ENCODE measurements at regions of chr11 and their contacts with region 1.

Region 1: DNA sequence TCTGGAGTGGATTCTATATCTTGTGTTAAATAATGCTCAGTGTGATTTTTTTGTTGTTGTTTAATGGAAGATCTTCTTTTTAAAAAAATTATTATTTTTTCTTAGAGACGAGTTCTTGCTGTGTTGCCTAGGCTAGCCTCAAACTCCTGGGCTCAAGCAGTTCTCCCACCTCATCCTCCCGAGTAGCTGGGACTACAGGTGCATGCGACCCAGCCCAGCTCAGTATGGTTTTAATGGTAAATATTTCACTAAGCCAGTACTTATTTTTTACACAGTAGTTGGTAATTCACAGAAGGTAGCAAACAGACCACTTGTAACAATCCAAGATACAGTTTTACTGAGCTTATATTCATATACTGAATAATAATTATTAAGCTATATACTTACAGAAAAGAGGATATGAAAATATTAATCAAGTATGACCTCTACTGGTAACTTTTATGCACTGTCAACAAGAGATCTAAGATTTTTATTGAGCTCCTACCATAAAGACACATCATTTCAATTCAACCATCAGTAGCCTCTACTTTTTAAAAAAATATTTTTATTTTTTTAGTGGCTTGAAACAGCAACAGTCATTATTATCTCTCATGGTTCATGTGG is 6.1 kb upstream of the CD59 start:
- DNase-seq: peak; percentile 37
- H3K4me3 Mint-ChIP-seq: no peak overlapping the region
- H3K27ac Mint-ChIP-seq: no peak overlapping the region
- H3K4me1 Mint-ChIP-seq: peaks cover 14% of the 10 kb centered on the region
- H3K27me3 Mint-ChIP-seq: no peaks in the 10 kb centered on the region
- CTCF ChIP-seq: peak; percentile 38

Region 2: DNA sequence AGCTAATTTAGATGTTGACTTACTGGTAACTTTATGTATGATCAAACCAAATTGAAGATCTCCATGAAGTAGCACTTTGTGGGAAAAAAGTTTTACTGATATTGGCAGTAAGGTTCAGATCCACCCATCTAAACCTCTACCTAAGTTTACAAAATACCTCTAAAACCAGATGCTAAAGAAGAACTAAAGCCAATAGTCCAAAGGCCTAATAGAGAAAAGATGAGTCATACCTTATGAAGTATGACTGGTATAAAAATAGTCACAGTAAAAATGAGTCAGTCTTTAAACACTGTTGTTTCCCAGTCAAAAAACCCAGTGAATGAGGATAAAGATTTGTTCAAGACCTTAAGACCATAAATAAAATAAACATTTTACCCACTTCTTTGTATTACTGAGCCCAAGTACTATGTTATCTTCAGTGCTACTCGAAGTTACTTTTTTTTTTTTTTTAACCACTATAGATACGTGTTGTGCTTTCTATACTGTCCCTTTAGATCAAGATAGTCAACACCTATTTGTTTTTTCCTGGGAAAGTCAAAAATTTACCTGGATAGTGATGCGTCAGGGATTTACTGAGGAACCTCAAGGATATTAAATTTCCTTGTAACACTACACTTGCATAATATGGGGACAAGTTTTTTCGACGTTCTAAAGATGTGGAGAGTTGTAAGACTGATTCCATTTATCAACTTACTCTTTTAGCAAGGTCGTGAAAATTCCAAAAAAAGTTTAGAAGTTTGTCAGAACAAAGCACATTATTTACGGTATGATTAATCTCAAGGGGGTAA is 1035.2 kb before region 1 on chr11:
- CTCF ChIA-PET with region 1: no interaction called
- POLR2A ChIA-PET with region 1: no interaction called
- intact Hi-C with region 1: no loop called
- DNase-seq: peak; percentile 76
- H3K4me3 Mint-ChIP-seq: no peak overlapping the region
- H3K27ac Mint-ChIP-seq: peak overlapping the region; percentile 32
- H3K4me1 Mint-ChIP-seq: peaks cover 13% of the 10 kb centered on the region
- H3K27me3 Mint-ChIP-seq: no peaks in the 10 kb centered on the region
- CTCF ChIP-seq: no peak

Region 3: GRCh38 chr11:33362051-33362910 is 380.1 kb before region 1 on chr11:
- CTCF ChIA-PET with region 1: interaction called, 42 read pairs
- POLR2A ChIA-PET with region 1: interaction called, 3 read pairs
- intact Hi-C with region 1: loop called (anchors 1 kb)
- DNase-seq: peak; percentile 50
- H3K4me3 Mint-ChIP-seq: no peak overlapping the region
- H3K27ac Mint-ChIP-seq: no peak overlapping the region
- H3K4me1 Mint-ChIP-seq: no peaks in the 10 kb centered on the region
- H3K27me3 Mint-ChIP-seq: no peaks in the 10 kb centered on the region
- CTCF ChIP-seq: peak; percentile 50

Region 4: DNA sequence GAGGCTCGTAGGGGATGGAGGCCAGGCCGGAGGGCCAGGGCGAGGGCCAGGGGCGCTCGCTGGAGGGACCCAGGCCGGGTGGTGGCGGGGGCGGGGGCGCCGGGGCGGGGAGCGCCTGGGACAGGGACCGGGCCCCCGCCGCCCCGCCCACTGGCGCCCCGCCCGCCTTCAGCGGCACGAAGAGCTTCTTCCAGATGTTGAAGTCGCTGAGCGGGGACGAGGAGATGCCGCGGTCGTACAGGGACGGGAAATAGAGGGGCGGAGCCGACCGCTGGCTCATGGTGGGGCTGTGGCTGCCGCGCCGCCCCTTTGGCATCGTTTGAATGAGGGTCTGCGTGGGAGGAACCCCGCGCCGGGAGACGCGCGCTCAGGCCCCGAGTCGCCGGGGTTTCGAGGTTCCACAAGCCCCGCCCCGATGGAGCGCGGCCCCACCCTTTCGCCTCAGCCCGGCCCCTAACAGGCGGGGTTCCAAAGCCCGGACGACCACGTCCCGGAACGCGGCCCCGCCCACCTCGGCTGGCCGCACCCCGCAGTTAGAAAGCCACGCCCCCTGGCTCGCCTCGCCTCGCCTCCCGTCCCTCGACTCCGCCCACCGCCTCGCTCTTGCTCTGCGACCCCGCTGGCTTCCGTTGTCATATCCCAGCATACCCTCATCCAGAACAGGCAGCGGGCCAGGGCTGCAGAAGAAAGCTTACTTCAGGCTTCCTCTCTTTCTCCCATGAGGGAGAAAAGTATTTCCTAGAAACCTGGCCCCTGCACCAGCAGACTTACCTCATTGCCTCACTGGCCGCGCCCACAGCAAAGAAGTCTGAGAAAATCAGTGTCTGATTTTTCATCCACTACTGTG is 41.7 kb before region 1 on chr11 and contains the start of gene C11orf91:
- CTCF ChIA-PET with region 1: interaction called, 20 read pairs
- POLR2A ChIA-PET with region 1: interaction called, 70 read pairs
- intact Hi-C with region 1: no loop called
- DNase-seq: peak; percentile 94
- H3K4me3 Mint-ChIP-seq: peak within 1 kb of the TSS; percentile 79
- H3K27ac Mint-ChIP-seq: peak within 1 kb of the TSS; percentile 92
- H3K4me1 Mint-ChIP-seq: peaks cover 45% of the 10 kb centered on the region
- H3K27me3 Mint-ChIP-seq: no peaks in the 10 kb centered on the region
- CTCF ChIP-seq: no peak
- total RNA-seq, gene C11orf91: 2.8 and 2.9 TPM in 2 replicates

Region 5: DNA sequence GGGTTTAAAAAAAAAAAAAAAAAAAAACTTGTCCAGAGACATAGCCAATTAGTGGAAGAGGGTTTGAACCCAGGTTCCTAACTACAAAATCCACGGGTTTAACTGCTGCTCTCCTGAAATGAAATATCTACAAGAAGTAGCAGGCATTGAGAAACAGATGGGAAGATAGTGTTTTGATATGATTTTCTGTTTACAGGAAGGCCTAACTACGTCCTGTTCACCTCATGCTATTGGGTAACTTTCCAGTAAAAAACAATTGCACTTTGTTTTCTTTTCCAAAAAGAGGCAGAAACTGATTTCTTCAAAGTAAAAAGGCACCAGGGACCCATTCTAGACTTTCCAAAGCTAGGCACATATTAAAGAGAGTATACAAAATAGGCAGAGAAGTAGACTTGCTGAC is 35.8 kb before region 1 on chr11:
- CTCF ChIA-PET with region 1: interaction called, 20 read pairs
- POLR2A ChIA-PET with region 1: interaction called, 70 read pairs
- intact Hi-C with region 1: no loop called
- DNase-seq: peak; percentile 46
- H3K4me3 Mint-ChIP-seq: no peak overlapping the region
- H3K27ac Mint-ChIP-seq: peak overlapping the region; percentile 46
- H3K4me1 Mint-ChIP-seq: peaks cover 37% of the 10 kb centered on the region
- H3K27me3 Mint-ChIP-seq: no peaks in the 10 kb centered on the region
- CTCF ChIP-seq: no peak

Region 6: DNA sequence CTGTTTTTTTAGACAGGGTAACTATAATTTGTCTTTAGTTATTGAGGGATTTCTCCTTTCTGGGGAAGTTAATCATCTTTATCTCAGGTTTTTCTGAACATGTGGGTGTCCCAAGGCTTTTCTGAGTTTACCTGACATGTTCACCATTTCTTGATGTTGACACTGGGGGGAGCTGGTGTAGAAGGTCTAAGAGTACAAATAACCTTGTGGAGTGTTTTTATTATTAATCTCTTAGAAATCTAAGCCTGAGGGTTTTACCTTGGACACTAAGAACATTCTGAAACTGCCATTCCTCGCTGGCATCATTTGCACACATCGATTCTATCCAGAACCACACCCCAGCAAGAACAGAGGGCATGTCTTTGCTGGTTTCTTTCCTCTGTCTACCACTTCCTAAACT is 26.1 kb before region 1 on chr11:
- CTCF ChIA-PET with region 1: interaction called, 85 read pairs
- POLR2A ChIA-PET with region 1: interaction called, 409 read pairs
- intact Hi-C with region 1: loop called (anchors 1 kb)
- DNase-seq: peak; percentile 86
- H3K4me3 Mint-ChIP-seq: peak overlapping the region; percentile 53
- H3K27ac Mint-ChIP-seq: peak overlapping the region; percentile 78
- H3K4me1 Mint-ChIP-seq: peaks cover 31% of the 10 kb centered on the region
- H3K27me3 Mint-ChIP-seq: no peaks in the 10 kb centered on the region
- CTCF ChIP-seq: peak; percentile 45

Region 7: GRCh38 chr11:33722579-33723225 is 19.6 kb before region 1 on chr11:
- CTCF ChIA-PET with region 1: interaction called, 78 read pairs
- POLR2A ChIA-PET with region 1: interaction called, 409 read pairs
- intact Hi-C with region 1: no loop called
- DNase-seq: peak; percentile 83
- H3K4me3 Mint-ChIP-seq: peak overlapping the region; percentile 63
- H3K27ac Mint-ChIP-seq: peak overlapping the region; percentile 93
- H3K4me1 Mint-ChIP-seq: peaks cover 68% of the 10 kb centered on the region
- H3K27me3 Mint-ChIP-seq: no peaks in the 10 kb centered on the region
- CTCF ChIP-seq: no peak

Region 8: DNA sequence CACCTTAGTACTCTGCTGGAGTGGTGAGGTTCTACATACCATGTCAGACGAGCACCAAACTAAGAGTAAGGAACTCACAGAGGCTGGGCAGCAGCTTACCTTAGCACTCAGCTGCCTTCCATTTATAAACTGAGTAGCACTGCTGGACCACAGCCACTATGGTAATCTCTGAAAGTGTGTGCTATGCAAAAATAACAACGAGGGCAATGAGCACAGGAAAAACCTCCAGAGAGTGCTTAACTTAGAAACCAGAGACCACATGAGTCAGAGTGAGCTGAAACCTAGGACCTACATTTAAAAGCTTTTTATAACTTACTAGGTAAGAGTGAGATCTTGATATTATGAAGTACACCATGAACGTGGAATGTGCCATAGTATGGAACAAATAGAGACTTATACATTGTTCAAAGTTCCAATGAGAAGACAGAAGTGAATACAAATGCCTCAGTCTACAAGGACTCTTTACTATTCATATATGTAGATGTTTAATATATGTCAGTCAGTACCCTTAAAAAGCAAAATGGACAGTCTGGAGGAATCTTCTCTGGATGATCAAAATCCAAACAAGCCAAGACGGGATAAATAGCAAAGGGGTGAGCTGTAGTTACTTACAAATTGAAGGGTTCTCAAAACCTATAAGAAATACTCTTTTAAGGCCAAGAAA is 11.1 kb after region 1 on chr11:
- CTCF ChIA-PET with region 1: interaction called, 13 read pairs
- POLR2A ChIA-PET with region 1: interaction called, 8 read pairs
- intact Hi-C with region 1: no loop called
- DNase-seq: no peak
- H3K4me3 Mint-ChIP-seq: no peak overlapping the region
- H3K27ac Mint-ChIP-seq: no peak overlapping the region
- H3K4me1 Mint-ChIP-seq: no peaks in the 10 kb centered on the region
- H3K27me3 Mint-ChIP-seq: no peaks in the 10 kb centered on the region
- CTCF ChIP-seq: no peak

Region 9: DNA sequence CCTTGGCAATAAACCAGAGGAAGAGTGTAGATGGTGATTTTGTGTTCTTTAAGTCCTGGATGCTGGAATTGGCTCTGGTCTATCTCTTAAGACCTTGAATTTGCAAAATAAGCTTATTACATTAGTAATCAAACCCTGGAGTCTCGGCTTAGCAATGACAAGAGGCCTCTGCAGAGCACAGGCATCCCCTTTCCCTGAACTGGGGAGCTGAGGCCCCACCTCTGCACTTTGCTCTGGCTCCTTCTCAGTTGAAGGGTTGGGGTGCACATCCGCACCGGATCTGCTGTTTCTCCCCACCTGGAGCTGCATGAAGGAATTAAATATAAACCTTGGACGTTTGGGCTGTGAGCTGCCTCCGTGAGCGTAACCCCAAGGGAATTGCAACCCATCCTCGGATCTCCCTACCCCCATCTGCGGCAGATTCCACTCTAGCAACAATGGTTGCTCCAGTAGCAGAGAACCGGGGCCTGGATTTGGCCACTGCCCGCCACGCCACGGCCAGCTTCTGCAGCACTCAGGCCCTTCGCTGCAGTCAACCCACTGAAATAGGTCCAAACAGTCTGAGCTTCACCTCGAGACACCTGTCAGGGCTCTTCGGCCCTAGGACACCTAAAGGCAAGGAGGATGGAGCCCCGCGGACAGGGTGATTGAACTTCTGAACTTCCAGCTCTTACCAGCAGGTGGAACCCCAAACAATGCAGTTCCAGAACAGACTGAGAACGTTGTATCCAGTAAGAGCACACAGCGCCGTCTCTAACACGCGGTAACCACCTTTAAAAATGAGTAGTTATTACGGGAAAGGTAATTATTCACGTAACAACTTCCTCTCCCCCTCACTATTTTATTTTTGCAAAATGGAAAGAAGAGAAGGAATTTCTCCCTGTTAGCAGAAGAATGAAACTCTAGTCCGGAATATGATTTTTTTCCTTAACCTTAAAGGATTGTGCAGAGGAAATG is 254.4 kb after region 1 on chr11:
- CTCF ChIA-PET with region 1: no interaction called
- POLR2A ChIA-PET with region 1: no interaction called
- intact Hi-C with region 1: no loop called
- DNase-seq: peak; percentile 85
- H3K4me3 Mint-ChIP-seq: peak overlapping the region; percentile 15
- H3K27ac Mint-ChIP-seq: no peak overlapping the region
- H3K4me1 Mint-ChIP-seq: peaks cover 12% of the 10 kb centered on the region
- H3K27me3 Mint-ChIP-seq: no peaks in the 10 kb centered on the region
- CTCF ChIP-seq: peak; percentile 76